T-cell (primary cell): ENCODE measurements at regions of chr17 and their contacts with region 1.

Region 1: DNA sequence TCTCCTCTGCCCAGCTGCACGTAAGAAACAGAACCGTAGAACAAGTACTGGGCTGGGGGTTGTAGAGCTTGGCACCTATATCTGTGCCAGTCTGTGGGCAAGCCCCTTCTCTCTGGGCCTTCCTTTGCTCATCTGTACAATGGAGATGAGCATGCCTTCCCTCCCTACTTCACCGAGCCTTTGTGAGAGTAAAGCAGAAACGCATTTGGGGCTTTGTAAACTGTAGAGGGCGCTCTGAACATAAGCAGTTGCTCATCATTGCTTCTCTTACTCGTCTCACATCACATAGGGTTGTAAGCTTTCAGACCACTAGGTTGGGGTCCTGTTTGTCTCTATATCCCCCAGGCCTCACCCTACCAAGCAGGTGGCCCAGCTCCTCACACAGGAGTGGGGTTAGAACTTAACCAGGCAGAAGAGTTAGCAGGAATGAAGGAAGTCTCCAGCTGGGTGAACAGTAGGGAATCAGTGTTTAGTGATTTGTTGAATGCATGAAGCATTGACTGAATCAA is 15.1 kb downstream of the SAMD14 start:
- DNase-seq: peak in 17 of 35 experiments; percentile 19 to 65 (median 30)
- ATAC-seq: peak in 1 of 4 experiments; percentile 36
- H3K4me3 ChIP-seq: no peak overlapping the region
- H3K4me3 Mint-ChIP-seq: peak overlapping the region in 1 of 3 donors; percentile 48
- H3K27ac ChIP-seq: no peak overlapping the region
- H3K27ac Mint-ChIP-seq: no peak overlapping the region
- H3K4me1 ChIP-seq: peaks cover 0 to 12% of the 10 kb centered on the region in 2 experiments
- H3K4me1 Mint-ChIP-seq: peaks cover 8 to 14% (median 10%) of the 10 kb centered on the region in 3 donors
- H3K27me3 ChIP-seq: peaks cover 0 to 54% of the 10 kb centered on the region in 2 experiments
- H3K27me3 Mint-ChIP-seq: peaks cover 23 to 42% of the 10 kb centered on the region in 2 donors

Region 2: DNA sequence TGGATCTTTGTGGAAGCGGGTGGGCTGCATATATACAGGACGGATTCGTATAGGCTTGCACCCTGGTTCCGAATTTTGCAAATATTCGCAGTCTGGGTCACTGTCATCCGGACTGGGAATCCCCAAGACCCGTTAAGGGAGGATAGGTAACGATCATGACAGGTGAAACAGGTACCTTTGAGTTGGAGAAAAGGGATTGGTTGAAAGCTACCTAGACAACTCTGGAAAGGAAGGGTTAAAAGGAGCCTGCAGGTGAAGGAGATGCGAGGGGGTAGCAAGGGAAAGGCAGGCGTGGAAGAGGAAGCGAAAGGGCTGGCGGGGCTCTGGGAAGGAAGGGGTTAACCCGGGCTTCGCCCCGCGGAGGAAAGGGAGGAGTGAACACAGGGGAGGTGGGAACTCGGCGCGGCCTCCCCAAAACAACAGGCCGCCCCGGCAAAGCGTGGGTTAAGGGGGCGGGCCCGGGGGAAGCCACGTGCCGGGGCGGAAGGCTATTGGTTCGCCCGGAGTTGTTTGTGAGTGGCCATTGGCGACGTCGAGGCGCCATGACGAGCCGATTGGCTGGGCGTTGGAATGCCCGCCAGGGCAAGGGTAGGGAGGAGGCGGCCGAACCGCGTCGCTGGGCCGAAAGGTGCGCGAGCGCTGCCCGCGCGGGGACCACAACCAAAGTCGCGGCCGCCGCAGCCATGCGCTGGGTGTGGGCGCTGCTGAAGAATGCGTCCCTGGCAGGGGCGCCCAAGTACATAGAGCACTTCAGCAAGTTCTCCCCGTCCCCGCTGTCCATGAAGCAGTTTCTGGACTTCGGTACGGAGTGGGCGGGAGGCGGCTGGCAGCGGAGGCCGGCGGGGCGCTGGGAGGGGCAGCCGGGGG is 19.9 kb before region 1 on chr17 and contains the start of gene PDK2:
- CTCF ChIA-PET with region 1: interaction called in 1 of 2 experiments, 14 read pairs
- POLR2A ChIA-PET with region 1: no interaction called
- DNase-seq: peak; percentile 93 to 98 (median 96)
- ATAC-seq: peak; percentile 89 to 96 (median 91)
- H3K4me3 ChIP-seq: peak within 1 kb of the TSS; percentile 59 to 82
- H3K4me3 Mint-ChIP-seq: peak within 1 kb of the TSS; percentile 95 to 97 (median 95)
- H3K27ac ChIP-seq: peak within 1 kb of the TSS; percentile 58
- H3K27ac Mint-ChIP-seq: peak within 1 kb of the TSS; percentile 96
- H3K4me1 ChIP-seq: peaks cover 5 to 29% of the 10 kb centered on the region in 2 experiments
- H3K4me1 Mint-ChIP-seq: peaks cover 35 to 58% (median 36%) of the 10 kb centered on the region in 3 donors
- H3K27me3 ChIP-seq: peaks cover 0 to 5% of the 10 kb centered on the region in 2 experiments
- H3K27me3 Mint-ChIP-seq: no peaks in the 10 kb centered on the region
- total RNA-seq, gene PDK2: 18.8 to 37.2 (median 30.0) TPM

Region 3: DNA sequence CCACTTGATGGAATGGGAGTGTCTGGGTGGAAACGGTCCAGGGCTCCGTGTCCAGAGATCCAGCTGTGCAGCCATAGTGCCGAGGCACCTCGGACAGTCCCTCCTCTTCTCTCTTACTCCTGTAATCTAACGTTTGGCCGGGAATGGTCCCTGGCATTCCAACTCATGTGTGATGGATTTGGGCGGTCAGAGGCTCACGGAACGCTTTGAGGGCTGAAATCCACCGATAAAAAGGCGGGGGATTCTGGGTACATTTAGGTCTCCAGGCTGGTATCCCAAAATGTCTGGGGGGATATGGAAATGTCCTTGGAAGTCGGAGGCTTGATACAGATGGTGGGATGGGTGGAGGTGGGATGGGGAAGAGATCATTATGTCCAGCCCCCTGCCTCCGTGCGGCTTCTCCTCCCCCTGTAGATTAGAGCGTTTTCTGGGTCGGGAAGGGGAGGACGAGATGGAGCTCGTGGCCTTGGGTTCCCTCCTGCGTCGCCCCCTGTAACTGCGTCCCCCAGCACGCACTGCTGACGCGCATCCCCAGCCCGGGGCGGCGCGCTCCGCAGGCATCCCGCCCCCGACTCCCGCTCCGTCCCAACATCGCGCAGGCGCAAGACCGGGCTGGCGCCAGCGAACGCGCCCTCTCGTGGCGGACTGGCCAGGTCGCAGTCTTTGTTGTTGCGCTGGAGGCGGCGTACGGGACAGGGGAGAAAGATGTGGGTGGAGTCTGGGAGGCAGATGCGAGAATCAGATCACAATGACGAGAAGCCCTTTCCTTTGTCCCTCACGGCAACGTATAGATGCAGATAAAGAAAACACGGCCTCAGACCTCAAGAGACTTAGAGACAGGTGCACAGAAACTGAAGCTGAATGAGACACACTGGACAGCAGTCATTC is 46.4 kb after region 1 on chr17:
- CTCF ChIA-PET with region 1: interaction called in 1 of 2 experiments, 11 read pairs
- POLR2A ChIA-PET with region 1: no interaction called
- DNase-seq: peak; percentile 85 to 97 (median 91)
- ATAC-seq: peak; percentile 89 to 97 (median 96)
- H3K4me3 ChIP-seq: peak overlapping the region; percentile 60 to 71
- H3K4me3 Mint-ChIP-seq: peak overlapping the region; percentile 72 to 79 (median 77)
- H3K27ac ChIP-seq: peak overlapping the region; percentile 49
- H3K27ac Mint-ChIP-seq: peak overlapping the region; percentile 40 to 85
- H3K4me1 ChIP-seq: peaks cover 14 to 27% of the 10 kb centered on the region in 2 experiments
- H3K4me1 Mint-ChIP-seq: peaks cover 28 to 40% (median 38%) of the 10 kb centered on the region in 3 donors
- H3K27me3 ChIP-seq: no peaks in the 10 kb centered on the region
- H3K27me3 Mint-ChIP-seq: no peaks in the 10 kb centered on the region